Esophagus squamous epithelium (tissue), 5 donors: ENCODE measurements at regions of chr7 and their contacts with region 1.

Region 1: GRCh38 chr7:151245360-151246101 is 3.0 kb downstream of the SMARCD3 start:
- DNase-seq: no peak
- H3K4me3 ChIP-seq: peak overlapping the region; percentile 8 to 64 (median 28)
- H3K27ac ChIP-seq: peak overlapping the region in 2 of 4 donors; percentile 5 to 39
- H3K4me1 ChIP-seq: peaks cover 42 to 77% (median 52%) of the 10 kb centered on the region in 3 donors
- H3K27me3 ChIP-seq: peaks cover 0 to 47% (median 0%) of the 10 kb centered on the region in 4 donors
- CTCF ChIP-seq: peak; percentile 27 to 73 (median 44)
- POLR2A ChIP-seq: no peak

Region 2: GRCh38 chr7:151304856-151305255 is 59.3 kb after region 1 on chr7:
- intact Hi-C with region 1: loop called (anchors 5 kb)
- DNase-seq: no peak
- H3K4me3 ChIP-seq: no peak overlapping the region
- H3K27ac ChIP-seq: no peak overlapping the region
- H3K4me1 ChIP-seq: peaks cover 0 to 10% (median 4%) of the 10 kb centered on the region in 3 donors
- H3K27me3 ChIP-seq: peaks cover 0 to 80% (median 2%) of the 10 kb centered on the region in 4 donors
- CTCF ChIP-seq: no peak
- POLR2A ChIP-seq: no peak

Region 3: DNA sequence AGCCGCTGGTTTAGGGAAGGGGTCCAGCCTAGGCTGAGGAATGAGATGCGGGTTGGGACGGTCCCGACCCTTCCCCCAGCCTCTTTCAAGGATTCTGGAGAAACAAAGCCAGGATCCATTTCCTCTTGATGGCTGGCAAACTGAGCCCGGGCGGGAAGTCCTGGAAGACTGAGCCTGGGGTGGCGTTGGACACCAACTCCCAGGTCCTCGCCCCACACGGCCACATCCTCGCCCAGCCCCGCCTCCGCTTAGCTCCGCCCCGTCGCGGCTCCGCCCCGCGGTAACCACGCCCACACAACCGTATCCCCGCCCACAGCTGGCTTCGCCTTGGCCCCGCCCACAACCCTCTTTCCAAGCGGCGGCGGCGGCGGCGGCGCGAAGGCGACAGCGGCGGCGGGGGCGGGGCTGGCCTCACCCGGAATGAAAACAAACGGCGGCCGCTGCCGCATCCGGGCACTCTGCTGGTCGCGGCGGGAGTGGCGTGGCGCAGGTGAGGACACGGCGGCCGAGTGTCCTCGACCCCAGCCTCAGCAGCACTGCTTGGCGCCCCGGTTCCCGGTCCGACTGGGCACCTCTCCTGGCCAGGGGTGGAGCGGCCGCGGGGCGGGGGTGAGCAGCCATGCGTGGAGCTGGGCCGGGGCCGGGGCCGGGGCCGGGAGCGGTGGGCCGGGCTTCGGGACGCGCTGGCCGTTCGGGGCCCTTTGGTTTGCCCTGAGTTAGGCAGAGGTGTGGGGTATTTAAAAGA is 96.0 kb after region 1 on chr7 and contains the start of gene NUB1:
- intact Hi-C with region 1: no loop called
- DNase-seq: peak; percentile 43
- H3K4me3 ChIP-seq: peak within 1 kb of the TSS; percentile 60 to 88 (median 86)
- H3K27ac ChIP-seq: peak within 1 kb of the TSS; percentile 72 to 91 (median 88)
- H3K4me1 ChIP-seq: peaks cover 4 to 38% (median 19%) of the 10 kb centered on the region in 3 donors
- H3K27me3 ChIP-seq: no peaks in the 10 kb centered on the region
- CTCF ChIP-seq: peak in 2 of 6 experiments; percentile 14 to 35
- POLR2A ChIP-seq: peak in 3 of 4 donors; percentile 64 to 78 (median 69)
- total RNA-seq, gene NUB1: 16.8 to 46.7 (median 26.1) TPM

Region 4: DNA sequence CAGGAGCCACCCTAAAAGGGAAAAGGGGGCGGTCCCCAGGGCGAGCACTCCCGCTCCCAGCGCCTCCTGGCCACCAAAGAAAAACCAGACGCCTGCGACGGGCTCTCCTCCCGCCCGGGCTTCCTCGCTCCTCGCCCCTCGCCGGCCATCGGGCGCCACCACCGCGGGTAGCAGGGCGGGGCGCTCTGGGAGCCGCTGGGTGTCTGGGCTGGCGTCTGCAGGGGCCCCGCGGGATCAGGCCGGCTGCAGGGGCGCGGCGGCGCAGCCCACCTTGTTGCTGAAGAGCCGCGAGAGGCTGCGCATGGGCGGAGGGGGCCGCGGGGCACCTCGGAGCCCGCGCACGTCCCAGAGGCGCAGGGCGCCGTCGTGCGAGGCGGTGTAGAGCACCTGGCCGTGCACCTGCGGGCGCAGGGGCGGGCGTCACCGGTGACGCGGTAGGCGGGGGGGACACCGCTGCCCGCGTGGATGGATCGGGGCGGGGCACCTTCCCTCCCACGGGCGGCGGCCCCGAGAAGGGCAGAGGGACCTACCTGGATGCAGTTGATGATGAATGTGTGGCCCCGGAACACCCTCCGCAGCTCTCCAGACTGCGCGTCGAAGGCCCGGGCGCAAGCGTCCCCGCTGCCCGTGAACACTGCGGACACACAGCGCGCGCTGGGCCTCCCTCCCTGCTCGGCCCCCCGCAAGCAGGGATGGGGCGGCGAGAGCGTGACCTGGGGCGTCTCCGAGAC is 136.0 kb after region 1 on chr7:
- intact Hi-C with region 1: no loop called
- DNase-seq: no peak
- H3K4me3 ChIP-seq: peak overlapping the region; percentile 1 to 61 (median 29)
- H3K27ac ChIP-seq: no peak overlapping the region
- H3K4me1 ChIP-seq: peaks cover 10 to 20% (median 14%) of the 10 kb centered on the region in 3 donors
- H3K27me3 ChIP-seq: peaks cover 0 to 54% (median 9%) of the 10 kb centered on the region in 4 donors
- CTCF ChIP-seq: no peak
- POLR2A ChIP-seq: no peak

Region 5: GRCh38 chr7:151393031-151393977 is 147.8 kb after region 1 on chr7:
- intact Hi-C with region 1: no loop called
- DNase-seq: no peak
- H3K4me3 ChIP-seq: no peak overlapping the region
- H3K27ac ChIP-seq: no peak overlapping the region
- H3K4me1 ChIP-seq: no peaks in the 10 kb centered on the region
- H3K27me3 ChIP-seq: peaks cover 0 to 45% (median 0%) of the 10 kb centered on the region in 4 donors
- CTCF ChIP-seq: no peak
- POLR2A ChIP-seq: no peak